HEK293 (cell line): ENCODE measurements at regions of chr10 and their contacts with region 1.

Region 1: DNA sequence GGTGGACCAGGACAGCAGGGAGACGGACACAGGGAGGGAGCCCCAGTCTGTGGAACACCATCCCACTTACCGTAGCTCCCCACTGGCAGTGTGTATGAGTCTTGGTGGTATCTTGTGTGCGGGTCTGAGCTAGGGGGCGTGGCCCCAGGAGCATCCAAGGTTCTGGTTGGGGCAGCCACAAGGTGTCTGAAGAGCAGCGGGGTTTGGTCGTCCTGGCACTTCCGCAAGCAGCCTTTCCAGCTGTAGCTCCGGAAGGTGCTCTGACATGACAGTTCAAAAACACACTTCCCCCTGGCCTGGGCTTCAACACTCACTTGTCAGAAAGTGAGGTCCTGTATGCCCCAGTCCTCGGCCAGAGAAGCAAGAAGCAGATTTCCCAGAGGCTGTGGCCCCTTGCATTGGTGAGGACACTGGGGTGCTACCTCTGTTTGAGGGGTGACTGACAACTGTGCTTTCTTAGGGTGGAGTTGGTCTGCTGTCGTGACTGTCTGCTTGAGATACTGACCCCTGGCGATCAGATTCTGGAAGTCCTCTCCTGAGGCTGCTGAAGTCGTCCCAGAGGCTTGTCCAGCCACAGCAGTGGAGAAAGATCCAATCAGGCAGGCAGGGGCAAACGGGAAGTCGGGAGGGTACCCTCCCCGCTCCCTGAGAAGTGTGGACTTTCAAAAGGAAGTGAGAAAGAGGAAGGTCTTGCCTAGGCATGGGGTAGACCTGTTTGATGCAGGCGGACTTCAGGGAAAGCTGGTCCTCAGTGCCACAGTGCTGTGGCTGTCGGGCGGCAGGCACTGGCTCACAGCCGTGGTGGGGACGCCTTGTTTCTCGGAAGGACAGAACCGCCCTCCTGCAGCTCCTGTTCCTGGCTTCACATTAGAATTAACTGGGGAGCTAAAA is 51.4 kb upstream of the PFKFB3 start:
- H3K4me3 ChIP-seq: no peak overlapping the region
- H3K27ac ChIP-seq: no peak overlapping the region
- H3K4me1 ChIP-seq: no peaks in the 10 kb centered on the region
- CTCF ChIP-seq: peak; percentile 29; the same call in 1 of the 2 replicates

Region 2: DNA sequence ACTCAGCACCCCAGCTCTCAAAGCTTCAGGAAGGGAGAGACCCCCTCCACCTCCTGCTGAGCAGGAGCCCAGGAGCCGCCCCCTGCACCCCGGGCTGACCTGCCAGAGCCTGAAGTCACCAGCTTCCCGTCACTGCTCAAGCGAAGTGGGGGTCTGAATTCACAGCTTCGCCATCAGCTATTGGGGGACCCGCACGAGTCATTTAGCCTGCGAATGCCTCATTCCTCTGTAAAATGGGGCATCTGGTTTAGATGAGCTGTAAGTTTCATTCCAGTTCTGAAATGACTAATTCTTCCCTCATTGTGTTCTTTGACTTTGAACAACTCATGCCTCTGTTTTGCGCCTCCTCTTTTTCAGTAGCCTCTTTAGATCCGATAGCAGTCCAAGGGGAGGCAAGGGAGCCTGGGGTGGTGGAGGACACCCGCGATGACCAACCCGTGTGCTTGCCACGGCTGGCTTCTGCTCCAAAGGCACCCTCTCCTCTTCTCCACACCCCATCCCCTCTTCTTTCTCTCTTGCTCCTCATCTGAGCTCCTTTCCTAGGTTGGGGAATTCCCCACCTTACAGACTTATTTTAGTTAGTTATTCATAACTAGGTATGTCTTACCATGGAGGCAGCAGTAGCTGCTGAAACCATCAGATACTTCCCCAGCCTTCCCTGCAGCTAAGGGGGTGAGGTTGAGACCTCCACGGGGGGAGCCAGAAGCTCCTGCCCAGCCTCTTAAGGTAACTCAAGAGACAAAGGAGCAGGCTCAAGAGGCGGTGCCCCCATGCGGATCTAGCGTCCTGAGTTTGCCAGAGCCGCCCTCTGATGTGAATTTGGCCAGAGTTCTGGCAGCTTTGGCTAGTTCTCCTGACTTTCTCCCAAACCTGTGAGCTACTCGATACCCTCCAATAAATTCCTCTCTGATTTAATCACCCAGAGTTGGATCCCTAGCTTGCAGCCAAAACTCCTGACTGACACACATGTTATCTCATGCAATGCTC is 14.8 kb before region 1 on chr10:
- CTCF ChIA-PET with region 1: interaction called, 13 read pairs
- POLR2A ChIA-PET with region 1: no interaction called
- H3K4me3 ChIP-seq: no peak overlapping the region
- H3K27ac ChIP-seq: no peak overlapping the region
- H3K4me1 ChIP-seq: no peaks in the 10 kb centered on the region
- CTCF ChIP-seq: no peak

Region 3: GRCh38 chr10:6163364-6164270 is 12.3 kb after region 1 on chr10:
- CTCF ChIA-PET with region 1: interaction called, 16 read pairs
- POLR2A ChIA-PET with region 1: interaction called, 7 read pairs
- H3K4me3 ChIP-seq: peak overlapping the region; percentile 69
- H3K27ac ChIP-seq: peak overlapping the region; percentile 93; the same call in 1 of the 2 replicates
- H3K4me1 ChIP-seq: peaks cover 7% of the 10 kb centered on the region
- CTCF ChIP-seq: no peak